ENCODE measurements at regions of chr19 and their contacts with region 1.

Region 1: GRCh38 chr19:16247353-16248182 is 49.9 kb downstream of the AP1M1 start:
- DNase-seq: peak; percentile 89 to 94
- ATAC-seq: peak; percentile 96 to 97 (median 97)
- H3K4me3 ChIP-seq: no peak overlapping the region
- H3K27ac ChIP-seq: no peak overlapping the region
- H3K4me1 ChIP-seq: no peaks in the 10 kb centered on the region
- H3K27me3 ChIP-seq: no peaks in the 10 kb centered on the region
- CTCF ChIP-seq: peak; percentile 96

Region 2: DNA sequence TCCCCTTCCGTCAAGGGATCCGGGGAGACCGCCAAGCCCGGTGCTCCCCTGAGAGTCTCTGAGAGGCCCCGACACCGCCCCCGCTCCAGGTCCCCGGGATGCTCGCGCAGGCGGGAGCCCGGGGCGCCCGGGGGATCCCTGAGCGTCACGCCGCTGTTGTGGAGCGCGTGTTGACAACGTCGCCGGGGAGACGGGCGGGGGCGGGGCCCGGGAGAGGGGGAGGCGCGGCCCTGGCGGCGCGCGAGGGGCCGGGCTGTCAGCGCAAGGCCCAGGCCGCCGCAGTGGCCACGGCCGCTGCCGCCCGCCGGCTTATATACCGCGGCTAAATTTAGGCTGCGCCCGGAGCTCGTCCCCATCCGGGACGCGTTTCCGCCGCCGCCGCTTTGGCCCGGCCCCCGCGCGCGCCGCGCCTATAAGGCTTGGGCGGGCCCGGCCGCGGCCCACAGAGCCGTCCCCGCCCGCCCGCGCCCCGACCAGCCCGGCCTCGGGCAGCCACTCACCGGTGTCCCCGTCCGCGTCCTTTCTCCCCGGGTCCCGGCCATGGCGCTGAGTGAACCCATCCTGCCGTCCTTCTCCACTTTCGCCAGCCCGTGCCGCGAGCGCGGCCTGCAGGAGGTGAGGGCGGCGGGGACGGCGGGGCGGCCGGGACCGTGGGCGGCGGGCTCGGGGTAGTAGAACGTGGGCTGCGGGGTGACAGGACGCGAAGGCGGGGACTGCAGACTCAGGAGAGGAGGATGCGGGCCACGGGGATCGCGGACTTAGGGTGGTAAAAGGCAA is 77.0 kb after region 1 on chr19 and contains the start of gene KLF2:
- intact Hi-C with region 1: loop called (anchors 2 to 5 kb)
- DNase-seq: peak; percentile 96 to 98
- ATAC-seq: peak; percentile 85 to 88 (median 86)
- H3K4me3 ChIP-seq: peak within 1 kb of the TSS; percentile 80
- H3K27ac ChIP-seq: peak within 1 kb of the TSS; percentile 91
- H3K4me1 ChIP-seq: peaks cover 12% of the 10 kb centered on the region
- H3K27me3 ChIP-seq: no peaks in the 10 kb centered on the region
- CTCF ChIP-seq: no peak
- total RNA-seq, gene KLF2: 12.7 to 35.4 (median 24.0) TPM

Region 3: GRCh38 chr19:16371540-16371986 is 124.0 kb after region 1 on chr19:
- intact Hi-C with region 1: no loop called
- DNase-seq: peak; percentile 54 to 74
- ATAC-seq: no peak
- H3K4me3 ChIP-seq: no peak overlapping the region
- H3K27ac ChIP-seq: peak overlapping the region; percentile 4
- H3K4me1 ChIP-seq: peaks cover 19% of the 10 kb centered on the region
- H3K27me3 ChIP-seq: no peaks in the 10 kb centered on the region
- CTCF ChIP-seq: no peak

Region 4: GRCh38 chr19:16382775-16383543 is 135.4 kb after region 1 on chr19:
- intact Hi-C with region 1: loop called (anchors 1 to 2 kb)
- DNase-seq: peak; percentile 89 to 93
- ATAC-seq: peak; percentile 68 to 76 (median 72)
- H3K4me3 ChIP-seq: no peak overlapping the region
- H3K27ac ChIP-seq: peak overlapping the region; percentile 93
- H3K4me1 ChIP-seq: peaks cover 42% of the 10 kb centered on the region
- H3K27me3 ChIP-seq: no peaks in the 10 kb centered on the region
- CTCF ChIP-seq: peak; percentile 87

Region 5: DNA sequence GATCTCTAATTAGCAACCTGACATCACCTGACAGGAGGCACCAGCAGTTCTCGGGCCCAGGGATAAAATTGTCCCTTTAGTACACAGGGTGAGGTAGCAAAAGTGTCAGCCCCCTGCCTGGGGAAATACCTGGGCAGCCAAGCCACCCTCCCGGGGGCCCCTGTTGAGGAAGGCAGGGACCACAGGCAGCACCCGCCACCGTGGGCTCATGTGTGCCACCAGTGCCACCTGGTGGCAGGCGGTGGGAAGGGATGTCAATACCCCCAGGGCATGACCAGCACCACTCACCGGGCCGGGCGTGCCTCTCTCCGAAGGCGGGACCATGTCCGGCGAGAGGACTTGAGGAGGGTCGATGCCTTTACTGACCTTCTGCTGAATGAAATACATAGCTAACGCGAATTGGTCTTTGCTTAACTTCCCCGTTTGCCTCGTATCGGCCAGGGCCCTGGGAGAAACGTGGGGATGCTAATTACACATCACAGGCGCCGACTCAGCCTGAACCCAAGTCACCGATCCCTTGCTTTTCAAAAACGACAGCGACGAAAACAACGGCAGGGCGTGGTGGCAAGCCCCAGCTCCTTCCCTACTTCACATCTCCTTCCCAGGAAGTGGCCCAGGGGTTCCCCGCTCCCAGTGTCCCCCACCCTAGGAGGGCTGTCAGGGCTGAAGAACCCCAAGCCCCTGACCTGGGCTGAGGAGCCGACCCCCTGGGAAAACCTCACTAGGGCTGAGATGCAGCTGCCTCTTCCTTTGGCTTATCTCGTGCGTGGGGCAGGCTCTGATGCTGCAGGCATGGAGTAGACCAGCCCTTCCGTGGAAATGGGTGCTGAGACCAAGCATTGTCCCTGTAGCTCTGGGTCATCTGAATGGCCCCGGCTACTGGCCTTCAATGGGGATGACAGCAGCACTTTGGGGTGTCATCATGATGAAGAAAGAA is 170.4 kb after region 1 on chr19:
- intact Hi-C with region 1: loop called in 1 of 2 experiments (anchors 10 kb)
- DNase-seq: peak; percentile 77 to 83
- ATAC-seq: peak; percentile 83 to 86 (median 84)
- H3K4me3 ChIP-seq: no peak overlapping the region
- H3K27ac ChIP-seq: peak overlapping the region; percentile 36
- H3K4me1 ChIP-seq: no peaks in the 10 kb centered on the region
- H3K27me3 ChIP-seq: no peaks in the 10 kb centered on the region
- CTCF ChIP-seq: peak; percentile 85

Measured in psoas muscle (tissue), 8 donors.